Transverse colon (tissue), 4 donors: ENCODE measurements at regions of chr3 and their contacts with region 1.

Region 1: DNA sequence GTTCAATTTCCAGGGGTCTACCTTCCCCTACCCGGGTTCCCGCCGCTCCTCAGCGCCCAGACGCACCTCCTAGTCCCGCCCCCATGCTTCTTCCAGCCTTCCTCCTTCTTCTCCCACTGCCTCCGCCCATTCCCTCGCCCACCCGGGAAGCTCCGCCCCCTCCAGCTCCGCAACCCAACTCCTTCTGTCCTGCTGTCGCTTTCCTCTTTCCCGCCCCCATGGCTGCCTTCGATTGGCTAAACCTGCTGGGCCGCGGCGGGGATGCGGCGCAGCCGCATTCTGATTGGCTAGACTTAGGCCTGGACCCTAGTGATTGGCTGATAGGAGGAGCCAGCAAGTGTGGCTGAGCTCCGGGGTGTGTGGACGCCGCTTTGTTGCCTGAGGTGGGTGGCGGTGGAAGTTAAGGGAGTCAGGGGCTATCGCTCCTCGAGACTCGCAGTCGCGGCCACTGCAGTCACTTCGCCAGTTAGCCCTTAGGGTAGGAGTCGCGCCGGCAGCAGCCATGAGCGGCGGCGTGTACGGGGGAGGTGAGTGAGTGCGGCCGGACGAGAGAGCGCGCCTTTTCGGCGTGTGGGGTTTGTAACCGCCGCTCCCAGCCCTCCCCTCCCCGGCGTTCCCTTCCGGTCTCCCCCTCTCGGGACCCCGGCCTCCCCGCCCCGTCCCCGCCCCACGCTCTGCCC is at the start of gene ACTL6A:
- DNase-seq: peak; percentile 100
- H3K4me3 ChIP-seq: peak within 1 kb of the TSS; percentile 74 to 89 (median 84)
- H3K27ac ChIP-seq: peak within 1 kb of the TSS; percentile 91 to 95 (median 92)
- H3K4me1 ChIP-seq: peaks cover 6 to 15% (median 8%) of the 10 kb centered on the region in 4 donors
- H3K27me3 ChIP-seq: no peaks in the 10 kb centered on the region
- CTCF ChIP-seq: no peak
- EP300 ChIP-seq: no peak
- POLR2A ChIP-seq: peak; percentile 64
- total RNA-seq, gene ACTL6A: 1.1 to 47.0 (median 28.4) TPM

Region 2: GRCh38 chr3:178036745-178037144 is 1526.0 kb before region 1 on chr3:
- in situ Hi-C with region 1: no loop called
- intact Hi-C with region 1: no loop called
- DNase-seq: no peak
- H3K4me3 ChIP-seq: no peak overlapping the region
- H3K27ac ChIP-seq: no peak overlapping the region
- H3K4me1 ChIP-seq: no peaks in the 10 kb centered on the region
- H3K27me3 ChIP-seq: no peaks in the 10 kb centered on the region
- CTCF ChIP-seq: no peak
- EP300 ChIP-seq: no peak
- POLR2A ChIP-seq: no peak

Region 3: GRCh38 chr3:179015551-179016020 is 547.1 kb before region 1 on chr3:
- in situ Hi-C with region 1: loop called in 2 of 4 experiments (anchors 25 kb)
- intact Hi-C with region 1: loop called (anchors 5 kb)
- DNase-seq: peak; percentile 41
- H3K4me3 ChIP-seq: no peak overlapping the region
- H3K27ac ChIP-seq: no peak overlapping the region
- H3K4me1 ChIP-seq: peaks cover 0 to 10% (median 0%) of the 10 kb centered on the region in 4 donors
- H3K27me3 ChIP-seq: no peaks in the 10 kb centered on the region
- CTCF ChIP-seq: peak; percentile 76 to 92 (median 86)
- EP300 ChIP-seq: no peak
- POLR2A ChIP-seq: no peak

Region 4: DNA sequence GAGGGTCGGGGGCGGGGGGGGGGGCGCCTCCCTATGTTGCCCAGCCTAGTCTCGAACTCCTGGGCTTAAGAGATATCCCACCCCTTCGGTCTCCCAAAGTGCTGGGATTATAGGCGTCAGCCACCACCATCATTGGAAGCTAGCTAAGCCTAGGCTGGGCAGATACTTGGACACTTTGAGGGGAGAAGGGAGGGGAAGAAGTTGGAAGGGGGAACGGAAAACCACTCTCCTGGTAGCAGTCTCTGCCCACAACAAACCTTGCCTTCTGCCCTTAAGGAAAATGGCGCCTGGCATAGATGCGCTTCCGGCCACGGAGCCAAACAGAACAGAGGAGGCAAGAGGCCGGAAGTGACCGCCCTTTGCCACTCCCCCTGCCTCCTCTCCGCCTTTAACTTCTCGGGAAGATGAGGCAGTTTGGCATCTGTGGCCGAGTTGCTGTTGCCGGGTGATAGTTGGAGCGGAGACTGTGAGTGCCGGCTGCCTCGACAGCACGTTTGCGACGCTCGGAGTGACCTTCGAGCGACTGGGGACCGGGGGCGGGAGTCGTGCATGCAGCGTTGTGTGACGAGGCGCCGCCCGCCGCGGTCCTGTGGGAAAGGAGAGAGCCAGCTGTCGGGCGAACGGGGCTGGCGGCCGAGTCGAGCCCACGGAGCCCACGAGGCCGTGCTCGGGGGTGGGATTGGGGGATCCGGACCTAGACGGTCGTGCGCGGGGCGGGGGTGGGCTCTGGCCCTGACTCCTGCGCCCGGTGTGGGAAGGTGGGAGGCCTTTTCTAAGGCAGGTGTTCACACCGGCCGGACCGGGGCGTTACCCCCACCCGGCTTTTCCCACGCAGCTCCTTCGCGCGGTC is 215.2 kb before region 1 on chr3 and contains the start of gene MFN1:
- in situ Hi-C with region 1: no loop called
- intact Hi-C with region 1: loop called (anchors 10 kb)
- DNase-seq: peak; percentile 95
- H3K4me3 ChIP-seq: peak within 1 kb of the TSS; percentile 55 to 80 (median 70)
- H3K27ac ChIP-seq: peak within 1 kb of the TSS; percentile 87 to 94 (median 91)
- H3K4me1 ChIP-seq: peaks cover 6 to 17% (median 7%) of the 10 kb centered on the region in 4 donors
- H3K27me3 ChIP-seq: no peaks in the 10 kb centered on the region
- CTCF ChIP-seq: no peak
- EP300 ChIP-seq: no peak
- POLR2A ChIP-seq: peak; percentile 70
- total RNA-seq, gene MFN1: 46.8 to 69.4 (median 62.6) TPM

Region 5: DNA sequence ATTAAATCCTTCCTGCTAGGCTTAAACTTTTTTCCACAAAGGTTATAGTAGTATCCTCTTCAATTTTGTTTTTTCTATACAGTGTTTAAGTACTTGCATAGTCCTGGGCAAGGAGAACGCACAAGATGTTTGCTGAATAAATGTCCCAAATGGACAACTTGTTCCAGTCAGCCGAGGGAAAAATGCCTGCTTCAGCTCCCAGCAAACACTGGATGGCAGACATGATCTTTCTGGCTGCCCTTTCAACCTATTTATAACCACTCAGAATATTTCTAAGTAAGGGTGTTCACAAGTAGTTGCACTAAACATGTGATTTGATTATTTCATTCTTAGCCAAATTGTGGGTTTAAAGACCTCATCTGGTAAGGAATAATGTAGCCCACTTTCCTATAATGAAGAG is 141.2 kb before region 1 on chr3:
- in situ Hi-C with region 1: loop called in 2 of 4 experiments (anchors 25 kb)
- intact Hi-C with region 1: loop called (anchors 10 kb)
- DNase-seq: no peak
- H3K4me3 ChIP-seq: no peak overlapping the region
- H3K27ac ChIP-seq: no peak overlapping the region
- H3K4me1 ChIP-seq: no peaks in the 10 kb centered on the region
- H3K27me3 ChIP-seq: no peaks in the 10 kb centered on the region
- CTCF ChIP-seq: peak in 4 of 5 experiments; percentile 14 to 35 (median 26)
- EP300 ChIP-seq: no peak
- POLR2A ChIP-seq: no peak

Region 6: GRCh38 chr3:179446501-179446900 is 116.2 kb before region 1 on chr3:
- in situ Hi-C with region 1: loop called in 1 of 4 experiments (anchors 25 kb)
- intact Hi-C with region 1: no loop called
- DNase-seq: no peak
- H3K4me3 ChIP-seq: no peak overlapping the region
- H3K27ac ChIP-seq: no peak overlapping the region
- H3K4me1 ChIP-seq: peaks cover 0 to 17% (median 0%) of the 10 kb centered on the region in 4 donors
- H3K27me3 ChIP-seq: peaks cover 17% of the 10 kb centered on the region
- CTCF ChIP-seq: peak in 1 of 5 experiments; percentile 10
- EP300 ChIP-seq: no peak
- POLR2A ChIP-seq: no peak

Region 7: GRCh38 chr3:179604321-179605078 is 41.8 kb after region 1 on chr3 and contains the starts of genes MRPL47 and NDUFB5:
- in situ Hi-C with region 1: no loop called
- intact Hi-C with region 1: loop called (anchors 5 kb)
- DNase-seq: peak; percentile 96
- H3K4me3 ChIP-seq: peak within 1 kb of the TSS; percentile 62 to 94 (median 82)
- H3K27ac ChIP-seq: peak within 1 kb of the TSS; percentile 85 to 96 (median 92)
- H3K4me1 ChIP-seq: peaks cover 13 to 27% (median 17%) of the 10 kb centered on the region in 4 donors
- H3K27me3 ChIP-seq: no peaks in the 10 kb centered on the region
- CTCF ChIP-seq: no peak
- EP300 ChIP-seq: no peak
- POLR2A ChIP-seq: peak; percentile 91
- total RNA-seq, gene MRPL47: 10.1 to 26.8 (median 20.7) TPM
- total RNA-seq, gene NDUFB5: 47.5 to 139 (median 88.5) TPM